Activated T-helper 1 cell treated with anti-CD3 and anti-CD28 coated beads, Interleukin-12 subunit alpha, Interleukin-12 subunit beta, Interleukin-2, Interleukin-4 antibody, amounts not matched to agents 30 ng/mL and 10 ng/mL and 1 ng/mL, durations not matched to agents 14 hours and 24 hours and 36 hours (primary cell): ENCODE measurements at regions of chr9 and their contacts with region 1.

Region 1: GRCh38 chr9:111886983-111887711 is 9.5 kb upstream of the UGCG start:
- DNase-seq: no peak
- H3K4me3 Mint-ChIP-seq: no peak overlapping the region
- H3K27ac Mint-ChIP-seq: no peak overlapping the region
- H3K4me1 Mint-ChIP-seq: peaks cover 3% of the 10 kb centered on the region
- H3K27me3 Mint-ChIP-seq: peaks cover 11% of the 10 kb centered on the region

Region 2: GRCh38 chr9:111870774-111871498 is 16.2 kb before region 1 on chr9:
- intact Hi-C with region 1: loop called (anchors 2 kb)
- DNase-seq: peak; percentile 6
- H3K4me3 Mint-ChIP-seq: no peak overlapping the region
- H3K27ac Mint-ChIP-seq: peak overlapping the region; percentile 49
- H3K4me1 Mint-ChIP-seq: peaks cover 20% of the 10 kb centered on the region
- H3K27me3 Mint-ChIP-seq: peaks cover 30% of the 10 kb centered on the region